ENCODE measurements at regions of chr10 and their contacts with region 1.

Region 1: DNA sequence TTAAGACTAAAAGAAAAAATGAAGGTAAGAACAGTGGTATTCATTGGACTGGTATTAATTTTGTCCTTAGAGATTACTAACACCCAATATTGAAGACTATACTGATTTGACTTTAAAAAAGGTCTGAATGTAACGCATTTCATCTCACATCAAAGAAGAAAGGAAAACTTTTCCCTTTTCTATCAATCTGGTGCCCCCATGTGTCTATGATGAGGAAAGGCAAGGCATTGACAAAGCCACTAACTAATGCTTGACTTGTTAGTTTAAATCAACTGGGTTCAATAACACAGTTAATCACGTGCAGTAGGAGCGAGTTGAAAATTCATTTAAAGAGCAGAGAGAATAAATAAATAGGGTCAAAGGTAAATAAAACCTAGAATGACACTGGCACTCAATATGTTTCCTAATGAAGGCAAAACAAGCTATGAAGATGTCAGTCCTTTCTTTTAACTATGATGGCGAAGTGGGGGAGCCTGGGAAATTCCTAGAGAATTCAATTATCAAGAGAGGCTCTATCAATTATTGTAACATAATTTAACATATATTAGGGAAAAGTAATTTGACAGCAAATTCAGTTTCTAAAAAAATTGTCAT is 180.9 kb downstream of the ANK3 start:
- DNase-seq: no peak
- ATAC-seq: peak; percentile 67
- H3K4me3 ChIP-seq: no peak overlapping the region
- H3K27ac ChIP-seq: no peak overlapping the region
- H3K4me1 ChIP-seq: no peaks in the 10 kb centered on the region
- H3K27me3 ChIP-seq: peaks cover 0 to 3% of the 10 kb centered on the region in 2 experiments; a peak in 1 of 4 replicates
- CTCF ChIP-seq: peak; percentile 63 to 68 (median 64); a peak in 5 of 6 replicates
- EP300 ChIP-seq: no peak
- POLR2A ChIP-seq: no peak
- RAD21 ChIP-seq: peak; percentile 86

Region 2: GRCh38 chr10:58781873-58782488 is 1426.8 kb before region 1 on chr10:
- CTCF ChIA-PET with region 1: no interaction called
- POLR2A ChIA-PET with region 1: no interaction called
- RAD21 ChIA-PET with region 1: no interaction called
- SMC1A ChIA-PET with region 1: no interaction called
- in situ Hi-C with region 1: no loop called
- intact Hi-C with region 1: loop called (anchors 5 kb)
- DNase-seq: peak; percentile 8
- ATAC-seq: peak; percentile 77
- H3K4me3 ChIP-seq: no peak overlapping the region
- H3K27ac ChIP-seq: no peak overlapping the region
- H3K4me1 ChIP-seq: no peaks in the 10 kb centered on the region
- H3K27me3 ChIP-seq: no peaks in the 10 kb centered on the region
- CTCF ChIP-seq: peak in 2 of 3 experiments; percentile 47 to 70; a peak in 4 of 6 replicates
- EP300 ChIP-seq: no peak
- POLR2A ChIP-seq: no peak
- RAD21 ChIP-seq: peak; percentile 77

Region 3: GRCh38 chr10:59792812-59793211 is 416.0 kb before region 1 on chr10:
- CTCF ChIA-PET with region 1: no interaction called
- POLR2A ChIA-PET with region 1: no interaction called
- RAD21 ChIA-PET with region 1: no interaction called
- SMC1A ChIA-PET with region 1: no interaction called
- in situ Hi-C with region 1: no loop called
- intact Hi-C with region 1: no loop called
- DNase-seq: no peak
- ATAC-seq: no peak
- H3K4me3 ChIP-seq: no peak overlapping the region
- H3K27ac ChIP-seq: no peak overlapping the region
- H3K4me1 ChIP-seq: no peaks in the 10 kb centered on the region
- H3K27me3 ChIP-seq: no peaks in the 10 kb centered on the region
- CTCF ChIP-seq: no peak
- EP300 ChIP-seq: no peak
- POLR2A ChIP-seq: no peak
- RAD21 ChIP-seq: no peak

Region 4: DNA sequence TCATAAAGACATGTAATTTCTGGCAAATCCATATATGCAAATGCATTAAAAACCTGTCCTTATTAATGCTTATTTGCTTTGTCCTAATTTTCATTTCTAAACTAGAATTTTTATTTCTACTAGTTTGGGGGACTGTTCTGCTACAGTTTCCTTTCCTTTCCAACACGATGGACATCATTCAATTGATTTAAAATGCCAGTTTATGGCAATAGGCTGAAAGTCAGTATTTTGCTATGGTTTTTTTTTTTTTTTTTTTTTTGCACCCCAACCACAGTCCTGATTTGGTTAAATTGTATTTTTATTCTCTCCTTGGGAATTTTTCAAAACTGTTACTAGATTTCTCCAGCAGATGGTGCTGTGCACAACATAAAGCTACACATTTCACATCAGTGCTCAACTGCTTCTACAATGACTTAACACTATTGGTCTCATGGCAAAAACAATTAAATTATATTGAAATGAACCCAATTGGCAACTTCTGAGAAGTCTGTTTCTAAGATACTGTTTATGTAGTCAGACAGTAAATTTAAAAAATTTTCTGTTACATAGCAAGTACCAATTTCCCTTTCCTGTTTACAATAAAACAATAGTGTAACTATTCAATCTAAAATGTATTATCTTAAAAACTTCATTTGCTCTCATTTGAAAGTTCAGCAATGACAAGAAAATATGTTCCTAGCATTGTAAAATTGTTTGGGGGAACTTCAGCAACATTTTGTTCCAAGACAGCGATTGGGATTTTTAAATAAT is 108.6 kb before region 1 on chr10:
- CTCF ChIA-PET with region 1: interaction called, 49 read pairs
- POLR2A ChIA-PET with region 1: no interaction called
- RAD21 ChIA-PET with region 1: interaction called, 7 read pairs
- SMC1A ChIA-PET with region 1: interaction called, 7 read pairs
- in situ Hi-C with region 1: no loop called
- intact Hi-C with region 1: loop called (anchors 1 kb)
- DNase-seq: no peak
- ATAC-seq: peak; percentile 73
- H3K4me3 ChIP-seq: no peak overlapping the region
- H3K27ac ChIP-seq: no peak overlapping the region
- H3K4me1 ChIP-seq: peaks cover 9% of the 10 kb centered on the region
- H3K27me3 ChIP-seq: no peaks in the 10 kb centered on the region
- CTCF ChIP-seq: peak; percentile 51 to 55 (median 54); a peak in 5 of 6 replicates
- EP300 ChIP-seq: no peak
- POLR2A ChIP-seq: no peak
- RAD21 ChIP-seq: peak; percentile 66

Region 5: GRCh38 chr10:60114765-60115586 is 93.8 kb before region 1 on chr10:
- CTCF ChIA-PET with region 1: interaction called, 47 read pairs
- POLR2A ChIA-PET with region 1: no interaction called
- RAD21 ChIA-PET with region 1: no interaction called
- SMC1A ChIA-PET with region 1: interaction called, 23 read pairs
- in situ Hi-C with region 1: no loop called
- intact Hi-C with region 1: loop called (anchors 1 kb)
- DNase-seq: no peak
- ATAC-seq: peak; percentile 76
- H3K4me3 ChIP-seq: no peak overlapping the region
- H3K27ac ChIP-seq: no peak overlapping the region
- H3K4me1 ChIP-seq: no peaks in the 10 kb centered on the region
- H3K27me3 ChIP-seq: no peaks in the 10 kb centered on the region
- CTCF ChIP-seq: peak; percentile 41 to 44 (median 44); a peak in 5 of 6 replicates
- EP300 ChIP-seq: no peak
- POLR2A ChIP-seq: no peak
- RAD21 ChIP-seq: peak; percentile 62

Region 6: GRCh38 chr10:60230892-60231291 is 22.1 kb after region 1 on chr10:
- CTCF ChIA-PET with region 1: interaction called, 15 read pairs
- POLR2A ChIA-PET with region 1: no interaction called
- RAD21 ChIA-PET with region 1: interaction called, 4 read pairs
- SMC1A ChIA-PET with region 1: interaction called, 18 read pairs
- in situ Hi-C with region 1: no loop called
- intact Hi-C with region 1: no loop called
- DNase-seq: no peak
- ATAC-seq: no peak
- H3K4me3 ChIP-seq: no peak overlapping the region
- H3K27ac ChIP-seq: no peak overlapping the region
- H3K4me1 ChIP-seq: no peaks in the 10 kb centered on the region
- H3K27me3 ChIP-seq: no peaks in the 10 kb centered on the region
- CTCF ChIP-seq: no peak
- EP300 ChIP-seq: no peak
- POLR2A ChIP-seq: no peak
- RAD21 ChIP-seq: no peak

Region 7: DNA sequence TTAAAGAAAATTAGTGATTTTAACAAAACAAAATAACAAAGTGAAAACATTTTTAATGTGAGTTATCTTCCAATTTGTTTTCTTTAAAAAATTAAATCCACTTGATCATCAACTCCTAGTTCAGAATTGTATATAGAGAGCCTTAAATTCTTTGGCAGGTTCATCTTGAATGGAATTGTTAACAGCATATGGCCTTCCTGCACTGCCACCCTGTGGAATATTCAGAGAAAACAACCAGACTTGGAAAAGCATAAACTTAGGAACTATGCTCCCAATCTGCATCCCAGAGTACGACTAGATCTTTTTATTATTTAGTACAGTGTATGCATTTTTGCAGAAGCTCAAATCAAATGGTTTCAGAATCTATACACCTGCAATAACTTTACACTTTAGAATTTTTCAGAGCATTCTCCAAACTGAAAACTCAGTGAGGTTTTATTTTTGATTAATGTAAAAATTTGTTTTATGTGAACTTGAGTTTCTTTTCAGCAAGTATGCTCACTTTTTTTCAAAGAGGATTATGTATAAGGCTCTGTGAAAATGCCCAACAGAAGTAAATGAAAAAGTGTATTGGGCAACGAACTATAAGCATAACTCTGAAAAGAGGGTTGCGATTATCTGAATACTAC is 225.8 kb after region 1 on chr10:
- CTCF ChIA-PET with region 1: interaction called, 19 read pairs
- POLR2A ChIA-PET with region 1: no interaction called
- RAD21 ChIA-PET with region 1: interaction called, 10 read pairs
- SMC1A ChIA-PET with region 1: interaction called, 10 read pairs
- in situ Hi-C with region 1: loop called (anchors 10 kb)
- intact Hi-C with region 1: loop called (anchors 1 kb)
- DNase-seq: no peak
- ATAC-seq: peak; percentile 64
- H3K4me3 ChIP-seq: no peak overlapping the region
- H3K27ac ChIP-seq: no peak overlapping the region
- H3K4me1 ChIP-seq: no peaks in the 10 kb centered on the region
- H3K27me3 ChIP-seq: no peaks in the 10 kb centered on the region
- CTCF ChIP-seq: peak; percentile 42 to 69 (median 46); a peak in 5 of 6 replicates
- EP300 ChIP-seq: no peak
- POLR2A ChIP-seq: no peak
- RAD21 ChIP-seq: peak; percentile 93

Region 8: GRCh38 chr10:60444494-60445064 is 235.8 kb after region 1 on chr10:
- CTCF ChIA-PET with region 1: interaction called, 11 read pairs
- POLR2A ChIA-PET with region 1: no interaction called
- RAD21 ChIA-PET with region 1: no interaction called
- SMC1A ChIA-PET with region 1: interaction called, 3 read pairs
- in situ Hi-C with region 1: loop called (anchors 10 kb)
- intact Hi-C with region 1: no loop called
- DNase-seq: no peak
- ATAC-seq: no peak
- H3K4me3 ChIP-seq: no peak overlapping the region
- H3K27ac ChIP-seq: no peak overlapping the region
- H3K4me1 ChIP-seq: no peaks in the 10 kb centered on the region
- H3K27me3 ChIP-seq: no peaks in the 10 kb centered on the region
- CTCF ChIP-seq: no peak; a peak in 1 of 6 replicates
- EP300 ChIP-seq: no peak
- POLR2A ChIP-seq: no peak
- RAD21 ChIP-seq: peak; percentile 30; the same call in 1 of the 2 replicates

Region 9: DNA sequence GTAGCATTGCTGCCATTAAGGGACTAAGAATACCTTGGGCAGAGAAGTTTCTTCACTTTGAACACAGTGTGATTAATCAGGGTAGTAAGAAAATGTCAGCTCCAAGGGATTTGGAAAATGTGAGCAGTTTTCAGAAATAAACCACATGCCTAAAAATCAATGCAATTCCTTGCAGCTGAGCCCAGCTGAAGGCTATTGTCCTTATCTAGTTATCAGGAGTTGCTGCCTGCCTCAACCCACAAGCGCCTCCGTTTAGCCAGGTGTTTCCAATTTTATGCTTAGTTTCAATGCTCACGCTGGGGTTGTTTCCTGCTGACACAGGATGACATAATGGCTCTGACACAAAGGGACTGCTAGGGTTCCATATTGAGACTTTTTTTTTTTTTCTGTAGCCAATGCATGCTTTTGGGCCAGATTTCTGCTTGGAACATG is 313.2 kb after region 1 on chr10:
- CTCF ChIA-PET with region 1: no interaction called
- POLR2A ChIA-PET with region 1: no interaction called
- RAD21 ChIA-PET with region 1: no interaction called
- SMC1A ChIA-PET with region 1: no interaction called
- in situ Hi-C with region 1: no loop called
- intact Hi-C with region 1: no loop called
- DNase-seq: no peak
- ATAC-seq: no peak
- H3K4me3 ChIP-seq: no peak overlapping the region
- H3K27ac ChIP-seq: no peak overlapping the region
- H3K4me1 ChIP-seq: no peaks in the 10 kb centered on the region
- H3K27me3 ChIP-seq: no peaks in the 10 kb centered on the region
- CTCF ChIP-seq: no peak
- EP300 ChIP-seq: no peak
- POLR2A ChIP-seq: no peak
- RAD21 ChIP-seq: no peak

Region 10: GRCh38 chr10:61452655-61453641 is 1244.2 kb after region 1 on chr10 and contains the start of gene TMEM26:
- CTCF ChIA-PET with region 1: no interaction called
- POLR2A ChIA-PET with region 1: no interaction called
- RAD21 ChIA-PET with region 1: no interaction called
- SMC1A ChIA-PET with region 1: no interaction called
- in situ Hi-C with region 1: no loop called
- intact Hi-C with region 1: no loop called
- DNase-seq: no peak
- ATAC-seq: no peak
- H3K4me3 ChIP-seq: no peak within 1 kb of the TSS
- H3K27ac ChIP-seq: no peak within 1 kb of the TSS
- H3K4me1 ChIP-seq: no peaks in the 10 kb centered on the region
- H3K27me3 ChIP-seq: peaks cover 2 to 4% of the 10 kb centered on the region in 2 experiments; a peak in 3 of 4 replicates
- CTCF ChIP-seq: no peak
- EP300 ChIP-seq: no peak
- POLR2A ChIP-seq: no peak
- RAD21 ChIP-seq: no peak
- polyA plus RNA-seq, gene TMEM26: not detected

Measured in GM12878 (cell line).